Activated CD8-positive, alpha-beta T cell treated with anti-CD3 and anti-CD28 coated beads, Interleukin-2, amount 10 ng/mL, durations not matched to agents 7 days and 5 days (primary cell): ENCODE measurements at regions of chr1 and their contacts with region 1.

Region 1: GRCh38 chr1:160291248-160292220 is 6.6 kb upstream of the PEX19 start:
- DNase-seq: peak; percentile 78
- ATAC-seq: peak; percentile 90
- H3K4me3 Mint-ChIP-seq: no peak overlapping the region
- H3K27ac Mint-ChIP-seq: no peak overlapping the region
- H3K4me1 Mint-ChIP-seq: no peaks in the 10 kb centered on the region
- H3K27me3 Mint-ChIP-seq: no peaks in the 10 kb centered on the region

Region 2: DNA sequence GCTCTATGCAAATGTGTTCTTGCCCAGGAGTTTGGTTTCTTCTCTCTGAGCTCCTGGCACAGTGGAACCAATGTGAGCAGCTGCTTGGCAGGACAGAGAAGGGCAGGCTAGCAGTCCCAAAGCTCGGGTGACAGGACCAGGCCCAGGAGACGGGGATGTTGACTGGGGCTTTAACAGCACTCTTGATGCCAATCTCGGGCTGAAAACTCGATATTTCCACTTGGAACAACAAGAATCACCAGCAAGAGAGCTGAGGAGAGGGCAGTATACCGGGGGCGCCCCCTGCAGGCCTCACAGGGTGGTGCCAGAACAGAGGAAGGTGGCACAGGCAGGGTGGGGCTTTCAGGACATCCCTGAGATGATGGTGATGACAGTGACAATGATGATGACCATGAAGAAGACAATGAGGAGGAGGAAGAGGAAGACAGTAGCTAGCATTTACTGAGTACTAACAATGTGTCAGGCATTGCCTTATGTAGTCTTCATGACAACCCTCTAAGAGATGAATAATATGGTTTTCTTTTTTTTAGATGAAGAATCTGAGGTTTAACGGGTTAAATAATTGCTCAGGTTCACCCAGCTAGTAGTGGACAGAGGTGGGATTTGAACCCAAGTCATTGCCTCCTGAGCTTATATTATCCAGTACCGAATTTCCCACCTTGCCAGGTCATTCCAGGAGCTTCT is 212.9 kb before region 1 on chr1:
- CTCF ChIA-PET with region 1: interaction called, 10 read pairs
- POLR2A ChIA-PET with region 1: no interaction called
- DNase-seq: peak; percentile 78
- ATAC-seq: peak; percentile 93
- H3K4me3 Mint-ChIP-seq: no peak overlapping the region
- H3K27ac Mint-ChIP-seq: no peak overlapping the region
- H3K4me1 Mint-ChIP-seq: peaks cover 5% of the 10 kb centered on the region
- H3K27me3 Mint-ChIP-seq: peaks cover 49% of the 10 kb centered on the region

Region 3: DNA sequence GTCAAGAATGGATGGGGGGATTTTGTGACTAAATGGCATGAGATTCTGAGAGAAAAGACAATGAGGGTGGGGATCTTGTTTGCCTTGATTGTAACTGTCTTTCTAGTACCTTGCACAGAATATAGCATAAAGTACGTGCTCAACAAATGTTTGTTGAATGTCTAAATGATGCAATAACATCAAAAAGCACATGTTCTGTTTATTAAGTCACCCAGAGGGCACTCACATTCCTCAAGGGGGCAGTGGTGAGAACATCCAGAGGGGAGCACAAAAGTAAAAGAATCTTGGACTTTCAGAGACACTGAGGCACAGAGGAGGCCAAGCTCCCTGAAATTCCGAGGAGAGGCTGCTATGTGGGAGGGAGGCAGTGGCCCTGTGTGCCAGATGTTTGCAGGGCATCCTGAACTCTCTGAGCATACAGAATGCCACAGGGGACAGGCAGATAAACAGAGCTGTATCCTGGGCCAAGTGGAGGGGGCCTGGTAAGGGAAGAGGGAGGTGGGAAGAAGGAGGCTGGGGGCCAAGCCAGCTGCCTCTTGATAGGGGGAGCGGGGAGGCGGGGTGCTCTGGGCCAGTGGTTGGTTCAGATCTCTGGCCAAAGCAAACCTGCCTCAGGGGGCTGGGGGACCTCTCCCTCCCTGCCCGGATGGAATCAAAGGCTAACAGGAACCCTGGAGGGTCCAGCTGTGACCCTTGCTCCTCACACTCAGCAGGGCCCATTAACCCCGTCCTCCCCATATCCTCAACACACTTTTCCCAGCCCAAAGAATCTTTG is 182.5 kb before region 1 on chr1:
- CTCF ChIA-PET with region 1: interaction called, 109 read pairs
- POLR2A ChIA-PET with region 1: no interaction called
- DNase-seq: peak; percentile 60
- ATAC-seq: no peak
- H3K4me3 Mint-ChIP-seq: no peak overlapping the region
- H3K27ac Mint-ChIP-seq: no peak overlapping the region
- H3K4me1 Mint-ChIP-seq: no peaks in the 10 kb centered on the region
- H3K27me3 Mint-ChIP-seq: peaks cover 5% of the 10 kb centered on the region

Region 4: DNA sequence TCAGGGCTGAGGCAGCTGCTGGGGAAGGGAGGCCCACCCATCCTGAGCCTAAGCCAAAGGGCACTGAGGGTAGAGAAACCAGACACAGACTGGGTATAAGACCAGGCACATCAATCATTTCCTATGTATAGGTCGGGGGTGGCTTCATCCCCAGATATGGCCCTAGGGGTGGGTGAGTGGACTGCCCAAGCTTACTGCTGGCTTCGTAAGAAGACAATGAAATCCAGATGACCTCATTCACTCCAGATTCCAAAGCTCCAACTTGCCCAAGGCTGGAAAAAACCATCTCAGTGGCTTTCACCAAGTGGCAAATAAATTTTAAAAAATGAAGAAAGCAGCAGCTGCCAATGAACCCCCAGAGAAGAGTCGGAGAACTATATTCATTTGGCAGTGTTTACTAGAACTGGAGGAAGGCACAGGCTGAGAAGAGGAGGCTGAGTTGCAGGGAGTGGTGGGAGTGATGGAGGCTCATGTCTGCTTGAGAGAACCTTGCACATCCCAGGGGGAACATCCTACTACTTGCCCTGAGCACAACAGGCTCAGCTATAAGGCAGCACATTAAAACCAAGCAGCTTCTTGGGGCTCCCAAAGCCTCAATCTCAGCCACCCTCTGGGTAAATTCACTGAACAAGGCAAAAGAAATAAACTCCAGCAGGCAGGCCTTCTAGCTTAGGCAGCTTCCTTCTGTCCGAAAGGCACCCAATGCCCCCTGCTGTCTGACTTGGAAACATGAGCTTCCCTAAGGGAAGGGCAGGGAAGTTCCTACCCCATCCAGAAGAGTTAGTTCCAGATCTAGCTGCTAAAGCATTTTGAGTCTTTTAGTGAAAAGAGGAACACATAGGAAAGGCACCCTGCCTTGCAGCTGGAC is 72.2 kb before region 1 on chr1:
- CTCF ChIA-PET with region 1: interaction called, 27 read pairs
- POLR2A ChIA-PET with region 1: no interaction called
- DNase-seq: no peak
- ATAC-seq: no peak
- H3K4me3 Mint-ChIP-seq: no peak overlapping the region
- H3K27ac Mint-ChIP-seq: no peak overlapping the region
- H3K4me1 Mint-ChIP-seq: no peaks in the 10 kb centered on the region
- H3K27me3 Mint-ChIP-seq: no peaks in the 10 kb centered on the region

Region 5: DNA sequence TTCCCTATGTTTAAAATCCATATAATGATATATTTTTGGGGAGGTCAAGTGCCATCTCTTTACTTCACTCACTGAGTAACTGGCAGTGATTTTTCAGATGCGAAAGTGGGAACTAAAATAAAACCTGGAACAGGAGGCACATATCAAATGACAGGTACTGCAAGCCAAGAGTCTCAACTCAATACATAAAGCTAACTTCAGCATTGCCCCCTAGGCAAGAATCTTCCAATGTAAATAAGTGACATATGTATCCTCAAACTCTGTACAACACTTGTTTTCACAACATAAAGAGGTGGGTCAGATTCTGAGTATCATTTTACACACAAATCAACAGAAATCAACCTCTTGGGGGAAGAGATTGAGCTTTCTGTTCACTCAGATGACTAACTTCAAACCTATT is 47.3 kb before region 1 on chr1:
- CTCF ChIA-PET with region 1: interaction called, 46 read pairs
- POLR2A ChIA-PET with region 1: no interaction called
- DNase-seq: no peak
- ATAC-seq: no peak
- H3K4me3 Mint-ChIP-seq: no peak overlapping the region
- H3K27ac Mint-ChIP-seq: no peak overlapping the region
- H3K4me1 Mint-ChIP-seq: no peaks in the 10 kb centered on the region
- H3K27me3 Mint-ChIP-seq: no peaks in the 10 kb centered on the region

Region 6: DNA sequence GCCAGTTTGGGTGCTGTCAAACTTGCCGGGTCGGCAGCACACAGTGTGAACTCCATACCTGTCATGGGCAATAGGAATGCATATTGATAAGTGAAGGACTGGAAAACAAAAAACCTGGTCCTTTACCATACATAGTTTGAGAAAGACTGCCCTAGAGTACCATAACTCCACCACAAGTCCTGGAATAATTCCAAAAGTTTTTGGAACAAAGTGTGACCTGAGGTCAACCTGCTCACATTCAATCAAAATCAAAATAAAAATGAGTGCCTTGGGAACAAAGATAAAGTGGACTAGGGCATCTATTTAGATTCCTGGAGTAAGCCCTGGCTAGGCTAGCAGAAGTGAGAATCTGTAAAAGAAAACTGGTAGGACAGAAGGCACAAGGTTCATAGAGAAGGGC is 14.2 kb before region 1 on chr1:
- CTCF ChIA-PET with region 1: interaction called, 23 read pairs
- POLR2A ChIA-PET with region 1: no interaction called
- DNase-seq: no peak
- ATAC-seq: no peak
- H3K4me3 Mint-ChIP-seq: no peak overlapping the region
- H3K27ac Mint-ChIP-seq: no peak overlapping the region
- H3K4me1 Mint-ChIP-seq: no peaks in the 10 kb centered on the region
- H3K27me3 Mint-ChIP-seq: no peaks in the 10 kb centered on the region

Region 7: DNA sequence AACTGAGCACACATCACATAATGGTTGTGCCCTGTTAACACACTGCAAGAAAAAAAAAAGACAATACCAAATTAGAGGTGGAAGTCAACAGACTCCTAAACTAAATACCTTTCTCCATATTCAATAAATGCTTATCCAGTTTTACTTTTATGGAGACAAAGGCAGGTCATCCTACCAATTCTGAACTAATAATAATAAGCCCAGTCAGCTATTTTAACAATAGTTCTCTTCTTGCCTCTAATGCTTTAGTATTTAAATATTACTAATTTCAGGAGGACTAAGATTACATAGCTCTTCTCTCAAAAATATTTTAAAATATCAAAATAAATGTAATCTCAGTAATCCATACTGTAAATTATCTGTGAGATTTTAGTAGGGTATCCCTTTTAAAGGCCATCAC is 41.0 kb after region 1 on chr1:
- CTCF ChIA-PET with region 1: interaction called, 16 read pairs
- POLR2A ChIA-PET with region 1: no interaction called
- DNase-seq: no peak
- ATAC-seq: no peak
- H3K4me3 Mint-ChIP-seq: no peak overlapping the region
- H3K27ac Mint-ChIP-seq: no peak overlapping the region
- H3K4me1 Mint-ChIP-seq: no peaks in the 10 kb centered on the region
- H3K27me3 Mint-ChIP-seq: no peaks in the 10 kb centered on the region